GM12878 (cell line): ENCODE measurements at regions of chr12 and their contacts with region 1.

Region 1: DNA sequence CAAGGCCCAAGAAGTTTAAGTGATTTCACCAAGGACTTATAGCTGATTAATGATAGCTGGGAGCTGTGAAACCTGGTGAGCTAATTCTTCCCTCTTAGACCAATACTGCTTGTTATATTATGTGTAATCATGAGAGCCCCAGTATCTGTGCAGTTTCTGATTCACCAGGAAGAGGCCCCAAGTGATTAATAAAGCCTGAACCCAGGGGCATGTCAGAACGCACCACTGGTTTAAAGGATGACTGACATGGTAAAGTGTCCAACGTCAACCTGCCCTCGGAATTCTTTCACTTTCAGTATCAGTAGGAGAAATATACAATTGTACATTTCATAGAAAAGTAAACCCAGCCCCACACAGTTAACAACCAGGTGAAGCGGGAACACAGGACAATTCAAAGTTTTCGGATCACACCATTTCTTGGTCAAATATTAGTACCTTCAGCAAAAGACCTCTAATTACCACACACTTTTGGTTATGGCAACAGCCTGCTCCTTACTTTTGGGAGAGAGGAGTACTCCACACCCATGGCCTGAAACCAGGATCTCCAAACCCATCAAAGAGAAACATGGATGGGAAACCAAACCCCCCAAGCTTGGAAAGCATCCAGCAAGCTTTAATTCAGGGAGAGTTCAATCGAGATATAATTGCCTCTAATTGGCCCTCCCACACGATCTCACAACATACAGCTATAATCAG is 28.5 kb downstream of the TMCC3 start:
- DNase-seq: peak; percentile 87
- ATAC-seq: peak; percentile 98
- H3K4me3 ChIP-seq: peak overlapping the region; percentile 47; the same call in 1 of the 2 replicates
- H3K27ac ChIP-seq: peak overlapping the region; percentile 85
- H3K4me1 ChIP-seq: peaks cover 16% of the 10 kb centered on the region
- H3K27me3 ChIP-seq: no peaks in the 10 kb centered on the region
- CTCF ChIP-seq: no peak
- EP300 ChIP-seq: peak; percentile 68 to 79; a peak in 2 of 4 replicates
- POLR2A ChIP-seq: no peak
- RAD21 ChIP-seq: no peak

Region 2: DNA sequence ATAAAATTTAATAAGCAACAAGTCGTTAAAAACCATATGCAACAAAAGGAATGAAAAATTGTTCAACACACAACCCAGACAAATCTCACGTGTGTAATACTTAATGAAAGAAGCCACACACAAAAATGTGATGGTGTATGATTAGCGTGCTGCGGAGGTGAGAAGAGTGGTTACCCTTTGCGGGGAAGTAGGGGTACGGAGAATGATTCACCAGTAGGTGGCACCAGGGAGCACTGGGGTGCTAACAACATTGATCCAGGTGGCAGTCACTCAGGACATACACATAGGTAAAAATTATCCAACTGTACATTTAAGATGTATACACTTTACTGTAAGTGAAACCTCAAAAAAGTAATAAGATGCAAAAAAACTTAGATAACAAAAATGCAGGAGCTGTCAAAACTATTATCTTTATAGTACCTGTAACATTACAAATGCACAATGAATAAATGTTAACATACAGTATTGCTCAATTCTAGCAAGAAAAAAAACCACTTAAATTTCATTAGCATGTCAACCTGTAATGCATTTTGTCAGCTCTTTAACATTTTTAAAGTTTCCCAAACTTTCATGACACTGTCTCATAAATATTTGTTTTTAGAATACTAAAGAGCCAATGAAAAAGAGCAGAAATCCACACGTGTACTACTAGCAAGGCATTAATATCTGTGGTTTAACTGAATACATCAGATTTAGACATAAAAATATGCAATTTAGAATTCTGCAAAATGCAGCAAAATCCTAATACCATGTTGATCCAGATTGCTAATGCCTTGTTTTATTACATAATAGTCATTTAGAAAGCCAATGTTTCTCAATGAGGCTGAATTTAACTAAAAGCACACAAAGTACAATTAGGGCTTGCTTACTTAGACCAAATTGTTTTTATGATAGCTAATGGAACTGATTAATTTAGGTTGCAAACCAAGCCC is 18.1 kb before region 1 on chr12:
- CTCF ChIA-PET with region 1: interaction called, 10 read pairs
- POLR2A ChIA-PET with region 1: interaction called, 3 read pairs
- RAD21 ChIA-PET with region 1: interaction called, 13 read pairs
- SMC1A ChIA-PET with region 1: interaction called, 19 read pairs
- in situ Hi-C with region 1: no loop called
- intact Hi-C with region 1: no loop called
- DNase-seq: no peak
- ATAC-seq: peak; percentile 94
- H3K4me3 ChIP-seq: no peak overlapping the region
- H3K27ac ChIP-seq: no peak overlapping the region
- H3K4me1 ChIP-seq: peaks cover 8% of the 10 kb centered on the region
- H3K27me3 ChIP-seq: no peaks in the 10 kb centered on the region
- CTCF ChIP-seq: peak; percentile 55 to 80 (median 73)
- EP300 ChIP-seq: no peak
- POLR2A ChIP-seq: no peak
- RAD21 ChIP-seq: peak; percentile 52

Region 3: DNA sequence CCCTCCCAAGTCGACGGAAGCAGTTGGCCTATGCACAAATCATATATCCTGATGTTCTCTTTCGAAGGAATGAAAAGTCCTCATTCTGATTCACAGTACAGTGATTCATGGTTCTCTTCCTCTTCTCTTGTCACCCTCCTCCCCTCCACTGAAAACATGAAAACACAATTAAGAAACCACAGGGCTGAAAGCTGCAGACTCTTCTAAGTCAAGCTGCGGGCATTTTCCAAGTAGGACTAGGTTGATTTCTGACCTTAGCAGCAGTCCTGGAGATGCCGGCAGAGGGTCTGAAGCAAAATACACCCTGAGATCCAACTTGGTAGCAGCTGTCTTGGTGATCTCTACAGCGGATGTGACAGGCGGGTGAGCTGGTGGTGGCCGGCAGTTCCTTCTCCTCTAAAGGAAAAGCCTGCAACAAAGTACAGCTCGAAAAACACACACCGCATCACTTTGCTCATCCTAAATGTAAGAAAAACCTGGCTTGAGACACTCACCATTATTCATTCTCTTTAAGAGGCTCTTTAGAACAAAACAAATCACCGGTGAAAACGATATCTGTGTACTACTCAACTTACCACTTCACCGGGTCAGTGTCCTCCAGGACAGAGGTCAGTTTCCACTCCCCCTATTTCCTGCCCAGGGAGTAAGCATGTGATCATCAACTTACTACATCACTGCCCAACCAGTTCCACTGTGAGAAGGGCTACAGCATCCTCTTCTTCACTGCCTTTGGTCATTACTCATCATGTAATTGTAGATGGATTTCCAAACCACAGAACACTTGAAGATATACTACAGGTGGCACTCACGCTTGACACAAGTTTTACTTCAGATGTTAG is 22.5 kb after region 1 on chr12:
- CTCF ChIA-PET with region 1: interaction called, 40 read pairs
- POLR2A ChIA-PET with region 1: interaction called, 8 read pairs
- RAD21 ChIA-PET with region 1: interaction called, 68 read pairs
- SMC1A ChIA-PET with region 1: interaction called, 58 read pairs
- in situ Hi-C with region 1: no loop called
- intact Hi-C with region 1: loop called (anchors 2 kb)
- DNase-seq: peak; percentile 49
- ATAC-seq: peak; percentile 76
- H3K4me3 ChIP-seq: no peak overlapping the region
- H3K27ac ChIP-seq: peak overlapping the region; percentile 9; the same call in 1 of the 2 replicates
- H3K4me1 ChIP-seq: peaks cover 30% of the 10 kb centered on the region
- H3K27me3 ChIP-seq: no peaks in the 10 kb centered on the region
- CTCF ChIP-seq: no peak
- EP300 ChIP-seq: no peak
- POLR2A ChIP-seq: no peak
- RAD21 ChIP-seq: no peak

Region 4: DNA sequence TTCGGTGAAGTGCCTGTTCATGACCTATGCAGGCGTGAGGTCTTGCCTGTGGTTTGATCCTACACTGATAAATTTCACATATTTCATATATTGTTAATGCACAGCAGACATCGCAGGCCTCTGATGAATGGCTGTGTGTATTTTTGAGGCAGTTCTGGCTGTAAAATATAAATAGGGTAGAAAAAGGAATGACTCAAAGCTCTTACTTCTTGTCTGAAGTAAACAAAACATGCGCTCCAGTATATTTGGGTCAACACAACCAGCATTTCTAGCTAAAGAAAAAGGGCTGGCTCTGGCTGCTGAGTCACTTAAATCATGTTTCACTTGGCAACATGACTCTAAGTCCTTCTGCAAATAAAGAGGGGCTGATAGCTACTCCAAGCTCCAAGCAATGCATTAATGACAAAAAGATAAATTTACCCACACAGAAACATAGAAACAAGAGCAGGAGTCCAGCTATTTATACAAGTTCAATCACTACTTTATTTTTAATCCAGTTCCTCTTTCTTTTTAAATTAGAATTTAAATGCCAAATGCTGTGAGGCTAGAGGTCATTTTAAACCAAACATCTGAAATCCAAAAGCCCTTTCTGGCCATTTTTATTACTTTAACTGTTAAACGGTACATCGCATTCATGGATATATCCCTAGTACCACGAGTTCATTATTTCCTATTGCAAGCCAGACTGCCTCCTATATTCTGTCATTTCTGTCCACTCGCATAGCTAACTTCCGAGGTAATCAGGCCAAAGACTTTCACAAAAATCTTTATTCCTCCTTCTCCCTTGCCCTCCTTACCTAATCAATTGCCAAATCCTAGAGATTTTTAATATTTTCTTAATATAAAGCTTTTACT is 82.9 kb after region 1 on chr12:
- CTCF ChIA-PET with region 1: interaction called, 4 read pairs
- POLR2A ChIA-PET with region 1: no interaction called
- RAD21 ChIA-PET with region 1: interaction called, 15 read pairs
- SMC1A ChIA-PET with region 1: interaction called, 11 read pairs
- in situ Hi-C with region 1: no loop called
- intact Hi-C with region 1: no loop called
- DNase-seq: no peak
- ATAC-seq: no peak
- H3K4me3 ChIP-seq: no peak overlapping the region
- H3K27ac ChIP-seq: no peak overlapping the region
- H3K4me1 ChIP-seq: peaks cover 9% of the 10 kb centered on the region
- H3K27me3 ChIP-seq: no peaks in the 10 kb centered on the region
- CTCF ChIP-seq: no peak
- EP300 ChIP-seq: no peak
- POLR2A ChIP-seq: no peak
- RAD21 ChIP-seq: no peak

Region 5: DNA sequence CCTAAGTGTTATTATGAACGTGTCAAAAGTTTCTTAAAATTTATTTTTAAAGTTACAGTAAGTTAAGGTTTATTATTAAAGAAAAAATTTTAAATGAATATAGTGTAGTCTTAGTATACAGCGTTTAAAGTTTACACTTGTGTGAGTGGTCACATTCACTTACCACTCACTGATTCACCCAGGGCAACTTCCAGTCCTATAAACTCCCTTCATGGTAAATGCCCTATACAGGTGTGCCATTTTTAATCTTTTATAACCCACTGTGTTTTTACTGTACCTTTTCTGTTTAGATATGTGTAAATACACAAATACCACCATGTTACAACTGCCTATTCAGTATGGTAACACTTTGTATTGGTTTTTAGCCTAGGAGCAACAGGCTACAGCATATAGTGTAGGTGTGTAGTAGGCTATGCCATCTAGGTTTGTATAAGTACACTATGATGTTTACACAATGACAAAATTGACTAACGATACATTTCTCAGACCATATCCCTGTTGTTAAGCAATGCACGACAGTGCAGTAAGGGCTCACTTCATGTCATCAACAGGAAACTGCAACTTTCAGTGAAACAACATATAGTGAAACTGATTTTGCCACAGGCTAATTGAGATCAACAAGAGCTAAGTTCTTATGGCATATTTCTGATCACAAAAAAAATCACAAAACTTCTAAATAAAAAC is 140.6 kb after region 1 on chr12:
- CTCF ChIA-PET with region 1: interaction called, 9 read pairs
- POLR2A ChIA-PET with region 1: no interaction called
- RAD21 ChIA-PET with region 1: interaction called, 6 read pairs
- SMC1A ChIA-PET with region 1: interaction called, 21 read pairs
- in situ Hi-C with region 1: no loop called
- intact Hi-C with region 1: no loop called
- DNase-seq: peak; percentile 56
- ATAC-seq: peak; percentile 85
- H3K4me3 ChIP-seq: no peak overlapping the region
- H3K27ac ChIP-seq: peak overlapping the region; percentile 35
- H3K4me1 ChIP-seq: peaks cover 30% of the 10 kb centered on the region
- H3K27me3 ChIP-seq: no peaks in the 10 kb centered on the region
- CTCF ChIP-seq: no peak
- EP300 ChIP-seq: peak in 1 of 2 experiments; percentile 46; a peak in 1 of 4 replicates
- POLR2A ChIP-seq: no peak
- RAD21 ChIP-seq: no peak

Region 6: DNA sequence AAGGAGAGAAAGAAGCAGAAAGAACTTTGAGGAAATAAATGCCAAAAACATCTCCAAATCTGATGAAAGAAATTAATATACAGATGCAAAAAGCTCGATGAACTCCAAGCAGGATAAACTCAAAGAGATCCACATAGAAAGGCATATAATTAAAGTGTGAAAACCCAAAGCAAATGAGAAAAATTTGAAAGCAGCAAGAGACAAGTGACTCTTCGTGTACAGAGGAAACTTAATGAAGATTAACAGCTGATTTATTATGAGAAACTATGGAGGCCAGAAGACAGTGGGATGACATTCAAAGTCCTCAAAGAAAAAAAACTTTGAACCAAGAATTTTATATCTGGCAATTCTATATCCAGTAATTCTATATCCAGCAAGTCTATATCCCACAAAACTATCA is 191.5 kb after region 1 on chr12:
- CTCF ChIA-PET with region 1: interaction called, 11 read pairs
- POLR2A ChIA-PET with region 1: interaction called, 3 read pairs
- RAD21 ChIA-PET with region 1: interaction called, 7 read pairs
- SMC1A ChIA-PET with region 1: interaction called, 7 read pairs
- in situ Hi-C with region 1: no loop called
- intact Hi-C with region 1: loop called (anchors 5 kb)
- DNase-seq: no peak
- ATAC-seq: no peak
- H3K4me3 ChIP-seq: peak overlapping the region; percentile 0; the same call in 1 of the 2 replicates
- H3K27ac ChIP-seq: peak overlapping the region; percentile 13; the same call in 1 of the 2 replicates
- H3K4me1 ChIP-seq: peaks cover 29% of the 10 kb centered on the region
- H3K27me3 ChIP-seq: no peaks in the 10 kb centered on the region
- CTCF ChIP-seq: no peak
- EP300 ChIP-seq: 0 out of 4 replicates have a peak, but pooled peaks of 1 of the 2 experiments have one; percentile 15
- POLR2A ChIP-seq: no peak
- RAD21 ChIP-seq: no peak